ENCODE measurements at regions of chr1 and their contacts with region 1.

Region 1: DNA sequence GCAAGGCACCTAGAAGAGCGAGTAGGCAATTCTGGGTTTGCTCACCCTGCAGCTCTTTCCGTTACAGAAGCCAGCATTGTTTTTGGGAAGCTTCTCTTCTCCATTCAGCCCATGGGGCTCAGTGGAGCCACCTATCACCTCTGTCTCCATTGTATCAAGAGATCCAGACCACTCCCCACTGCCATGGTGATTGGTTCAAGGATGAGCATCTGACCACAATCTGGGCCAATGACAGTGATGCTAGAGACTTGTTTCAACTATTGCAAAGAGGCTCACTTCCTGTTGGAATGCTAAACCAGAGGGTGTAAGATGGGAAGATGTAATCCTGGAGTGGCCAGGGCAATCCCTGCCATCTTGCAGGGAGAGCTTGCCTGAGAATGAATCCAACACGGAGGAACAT is 6.6 kb downstream of the SPATA21 start:
- DNase-seq: peak; percentile 9
- H3K4me3 ChIP-seq: no peak overlapping the region
- H3K27ac ChIP-seq: no peak overlapping the region
- H3K4me1 ChIP-seq: no peaks in the 10 kb centered on the region
- H3K27me3 ChIP-seq: no peaks in the 10 kb centered on the region
- CTCF ChIP-seq: no peak

Region 2: DNA sequence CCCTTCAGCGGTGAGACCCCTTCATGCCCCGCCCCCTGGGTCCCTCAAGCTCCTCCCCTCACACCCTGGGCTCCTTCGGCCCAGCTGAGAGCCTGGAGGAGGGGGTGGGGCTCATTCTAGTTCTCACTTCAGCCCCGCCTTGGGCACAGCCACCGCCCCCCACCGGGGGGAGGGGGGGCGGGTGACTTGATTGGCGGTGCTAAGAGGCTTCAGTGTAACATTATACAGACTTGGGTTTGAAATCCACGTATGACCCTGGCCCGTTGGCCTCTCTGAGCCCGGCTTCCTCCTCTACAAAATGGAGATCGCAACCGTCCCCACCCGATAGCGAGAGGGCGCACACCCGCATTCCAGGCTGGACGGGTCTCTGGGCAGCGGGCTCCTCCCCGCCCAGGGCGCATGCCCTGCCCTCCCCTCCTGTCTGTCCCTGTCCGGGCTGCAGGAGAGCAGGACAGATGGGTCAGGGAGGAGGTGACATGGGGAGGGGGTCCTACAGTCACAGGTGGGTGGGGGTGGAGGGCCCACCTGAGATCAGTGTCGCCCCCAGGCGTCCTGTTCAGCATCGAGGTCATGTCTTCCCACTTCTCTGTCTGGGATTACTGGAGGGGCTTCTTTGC is 381.9 kb before region 1 on chr1:
- CTCF ChIA-PET with region 1: no interaction called
- dilution Hi-C with region 1: no loop called
- in situ Hi-C with region 1: no loop called
- intact Hi-C with region 1: no loop called
- DNase-seq: no peak
- H3K4me3 ChIP-seq: peak overlapping the region; percentile 13 to 45 (median 13)
- H3K27ac ChIP-seq: no peak overlapping the region
- H3K4me1 ChIP-seq: no peaks in the 10 kb centered on the region
- H3K27me3 ChIP-seq: no peaks in the 10 kb centered on the region
- CTCF ChIP-seq: no peak

Region 3: GRCh38 chr1:16484931-16485330 is 54.3 kb after region 1 on chr1:
- CTCF ChIA-PET with region 1: no interaction called
- dilution Hi-C with region 1: loop called (anchors 5 kb)
- in situ Hi-C with region 1: no loop called
- intact Hi-C with region 1: no loop called
- DNase-seq: no peak
- H3K4me3 ChIP-seq: no peak overlapping the region
- H3K27ac ChIP-seq: no peak overlapping the region
- H3K4me1 ChIP-seq: no peaks in the 10 kb centered on the region
- H3K27me3 ChIP-seq: no peaks in the 10 kb centered on the region
- CTCF ChIP-seq: no peak

Measured in mammary epithelial cell (primary cell).